ENCODE measurements at regions of chr1 and their contacts with region 1.

Region 1: GRCh38 chr1:7940745-7941436 is at the start of gene TNFRSF9:
- DNase-seq: peak; percentile 22

Region 2: GRCh38 chr1:7961216-7962015 is 20.5 kb after region 1 on chr1 and contains the start of gene PARK7:
- CTCF ChIA-PET with region 1: no interaction called
- POLR2A ChIA-PET with region 1: interaction called, 10 read pairs
- DNase-seq: peak; percentile 98

Measured in HEK293T (cell line).